Astrocyte of the cerebellum (primary cell): ENCODE measurements at regions of chr2 and their contacts with region 1.

Region 1: GRCh38 chr2:11778923-11779757 is 32.7 kb downstream of the LPIN1 start:
- DNase-seq: peak; percentile 20
- H3K4me3 ChIP-seq: no peak overlapping the region
- CTCF ChIP-seq: peak; percentile 92

Region 2: DNA sequence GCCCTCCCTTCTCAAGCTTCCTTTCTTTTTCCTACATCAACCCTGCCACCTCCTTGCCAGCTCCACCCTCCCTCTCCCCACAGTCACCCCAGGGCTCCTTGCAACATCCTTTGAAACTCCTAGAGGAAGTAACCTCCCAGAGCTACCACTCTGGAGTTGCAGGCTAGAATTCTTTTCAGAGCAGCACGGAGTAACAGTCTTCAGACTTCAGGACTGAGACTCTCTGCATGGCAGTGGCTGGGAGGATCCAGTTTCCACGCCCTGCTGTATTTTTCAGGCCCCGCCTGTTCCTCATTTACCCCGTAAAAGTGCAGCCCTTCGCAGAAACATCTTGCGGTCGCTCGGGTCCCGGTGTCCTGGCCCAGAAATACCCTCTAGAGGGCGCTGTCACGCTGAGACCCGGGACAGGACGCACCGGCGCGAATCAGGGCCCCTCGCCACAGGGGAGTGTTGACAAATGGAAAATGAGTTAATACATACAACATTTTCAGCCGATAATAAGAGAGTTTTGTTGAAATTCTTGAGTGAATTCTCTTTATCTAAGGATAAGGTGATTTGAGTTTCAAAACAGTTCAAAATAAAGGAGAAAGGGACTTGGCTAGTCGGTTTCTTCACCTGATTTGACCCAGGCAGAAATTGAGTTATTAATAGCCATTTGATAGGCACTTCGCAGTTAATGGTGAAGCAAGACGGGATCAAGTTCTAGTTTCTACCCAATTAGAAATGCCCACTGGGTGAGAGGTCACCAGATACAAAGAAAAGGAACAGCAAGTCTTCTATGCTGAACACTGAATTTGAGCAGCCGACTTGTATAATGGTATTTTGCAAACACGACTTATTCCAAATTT is 90.7 kb before region 1 on chr2:
- in situ Hi-C with region 1: loop called (anchors 25 kb)
- DNase-seq: no peak
- H3K4me3 ChIP-seq: no peak overlapping the region
- CTCF ChIP-seq: peak; percentile 91

Region 3: DNA sequence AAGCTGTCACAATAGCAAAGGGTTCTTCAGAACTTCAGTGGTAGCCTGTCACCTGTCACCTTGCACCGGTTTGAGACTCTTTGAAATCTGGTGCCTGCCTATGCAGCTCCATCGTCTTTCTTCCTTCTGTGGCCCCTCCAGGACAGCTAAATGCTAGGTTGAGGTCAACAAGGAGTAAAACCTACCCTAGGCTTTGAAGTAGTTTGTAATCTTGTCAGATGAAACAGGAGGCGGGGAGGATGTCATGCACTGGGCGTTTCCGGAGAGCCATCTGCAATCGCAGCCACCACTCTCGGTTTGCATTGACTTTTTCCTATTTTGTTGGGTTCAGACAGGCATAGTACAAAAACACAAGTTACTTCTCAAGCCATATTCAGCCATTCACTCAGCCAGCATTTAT is 84.0 kb after region 1 on chr2:
- in situ Hi-C with region 1: no loop called
- DNase-seq: no peak
- H3K4me3 ChIP-seq: no peak overlapping the region
- CTCF ChIP-seq: no peak